ENCODE measurements at regions of chr19 and their contacts with region 1.

Region 1: DNA sequence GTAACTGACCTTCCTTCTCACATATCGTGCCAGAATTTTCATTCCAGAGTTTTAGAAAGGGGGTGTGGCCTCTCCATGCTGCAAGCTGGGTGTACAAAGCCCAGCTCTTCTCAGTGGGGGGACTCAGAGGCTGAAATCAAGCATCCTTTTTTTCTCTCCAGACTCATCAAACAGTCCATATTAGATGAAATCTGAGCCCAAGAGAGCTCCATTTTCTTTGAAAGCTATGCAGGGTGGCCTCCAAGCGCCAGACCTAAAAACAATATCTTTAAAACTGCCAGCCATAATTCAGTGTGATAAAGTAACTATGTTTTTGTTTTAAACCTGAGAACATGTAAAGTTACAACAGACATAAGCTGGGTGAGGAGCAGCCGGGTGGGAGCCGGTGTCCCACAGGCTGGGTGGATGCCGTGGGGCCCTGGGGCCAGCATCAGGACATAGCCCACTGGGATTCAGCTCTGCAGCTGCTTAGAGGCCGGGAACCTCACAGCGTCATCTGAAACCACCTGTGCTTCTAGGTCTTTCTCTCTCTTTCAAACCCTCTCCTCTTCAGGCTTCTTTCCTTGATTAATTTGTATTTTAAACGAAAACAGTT is 249.2 kb downstream of the ZNF536 start:
- DNase-seq: peak in 1 of 2 donors; percentile 13
- H3K4me3 ChIP-seq: no peak overlapping the region
- H3K27ac ChIP-seq: no peak overlapping the region
- H3K4me1 ChIP-seq: no peaks in the 10 kb centered on the region
- H3K27me3 ChIP-seq: no peaks in the 10 kb centered on the region
- CTCF ChIP-seq: no peak
- POLR2A ChIP-seq: no peak

Region 2: DNA sequence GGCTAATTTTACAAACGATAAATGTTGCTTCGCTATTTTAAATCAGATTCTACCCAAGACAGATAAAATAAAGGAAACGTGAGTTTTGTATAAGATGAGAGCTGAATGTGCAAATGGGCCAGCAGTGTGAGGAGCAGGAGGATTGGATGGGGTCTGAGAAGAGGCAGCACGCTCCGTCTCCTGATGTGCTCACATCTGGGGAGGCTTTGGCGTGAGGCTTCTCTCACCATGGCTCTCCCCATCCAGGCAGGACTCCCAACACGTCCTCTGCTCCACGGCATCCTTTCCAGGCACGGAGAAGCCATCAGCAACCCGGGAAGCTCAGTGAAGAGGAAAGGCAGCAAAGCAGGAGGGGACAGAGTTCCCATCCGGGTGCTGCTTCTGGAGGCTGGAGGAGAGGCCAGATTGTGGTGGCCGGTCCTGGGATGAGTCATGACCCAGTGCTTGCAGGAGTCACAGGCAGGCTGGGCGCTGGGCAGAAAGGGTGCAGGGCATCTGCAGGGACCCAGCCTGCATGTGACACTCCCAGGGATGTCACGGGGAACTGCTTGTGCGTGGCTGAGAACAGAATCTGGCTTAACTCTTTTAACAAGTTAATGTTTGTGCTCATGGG is 201.7 kb before region 1 on chr19:
- intact Hi-C with region 1: no loop called
- DNase-seq: no peak
- H3K4me3 ChIP-seq: no peak overlapping the region
- H3K27ac ChIP-seq: no peak overlapping the region
- H3K4me1 ChIP-seq: no peaks in the 10 kb centered on the region
- H3K27me3 ChIP-seq: no peaks in the 10 kb centered on the region
- CTCF ChIP-seq: no peak
- POLR2A ChIP-seq: no peak

Region 3: DNA sequence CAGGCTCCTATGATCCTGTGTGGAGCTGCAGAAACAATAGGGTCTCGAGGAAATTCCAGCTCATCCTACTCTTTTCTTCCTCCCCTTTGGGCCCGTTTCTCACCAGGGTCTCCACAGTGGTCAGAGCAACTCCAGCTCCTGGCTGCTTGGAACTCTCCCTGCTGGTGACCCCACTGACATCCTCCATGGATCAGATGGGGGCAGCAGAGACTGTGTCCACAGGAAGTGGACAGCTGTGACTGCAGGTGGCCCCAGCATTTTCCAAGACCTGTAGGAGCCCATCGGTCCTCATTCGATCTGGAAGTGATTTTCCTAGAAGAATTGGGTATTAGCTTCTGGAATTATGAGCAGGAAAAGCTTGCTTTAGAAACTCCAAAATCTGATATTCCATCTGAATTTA is 40.8 kb before region 1 on chr19:
- intact Hi-C with region 1: loop called (anchors 1 kb)
- DNase-seq: no peak
- H3K4me3 ChIP-seq: no peak overlapping the region
- H3K27ac ChIP-seq: no peak overlapping the region
- H3K4me1 ChIP-seq: no peaks in the 10 kb centered on the region
- H3K27me3 ChIP-seq: no peaks in the 10 kb centered on the region
- CTCF ChIP-seq: no peak
- POLR2A ChIP-seq: no peak